ENCODE measurements at regions of chr2 and their contacts with region 1.

Region 1: DNA sequence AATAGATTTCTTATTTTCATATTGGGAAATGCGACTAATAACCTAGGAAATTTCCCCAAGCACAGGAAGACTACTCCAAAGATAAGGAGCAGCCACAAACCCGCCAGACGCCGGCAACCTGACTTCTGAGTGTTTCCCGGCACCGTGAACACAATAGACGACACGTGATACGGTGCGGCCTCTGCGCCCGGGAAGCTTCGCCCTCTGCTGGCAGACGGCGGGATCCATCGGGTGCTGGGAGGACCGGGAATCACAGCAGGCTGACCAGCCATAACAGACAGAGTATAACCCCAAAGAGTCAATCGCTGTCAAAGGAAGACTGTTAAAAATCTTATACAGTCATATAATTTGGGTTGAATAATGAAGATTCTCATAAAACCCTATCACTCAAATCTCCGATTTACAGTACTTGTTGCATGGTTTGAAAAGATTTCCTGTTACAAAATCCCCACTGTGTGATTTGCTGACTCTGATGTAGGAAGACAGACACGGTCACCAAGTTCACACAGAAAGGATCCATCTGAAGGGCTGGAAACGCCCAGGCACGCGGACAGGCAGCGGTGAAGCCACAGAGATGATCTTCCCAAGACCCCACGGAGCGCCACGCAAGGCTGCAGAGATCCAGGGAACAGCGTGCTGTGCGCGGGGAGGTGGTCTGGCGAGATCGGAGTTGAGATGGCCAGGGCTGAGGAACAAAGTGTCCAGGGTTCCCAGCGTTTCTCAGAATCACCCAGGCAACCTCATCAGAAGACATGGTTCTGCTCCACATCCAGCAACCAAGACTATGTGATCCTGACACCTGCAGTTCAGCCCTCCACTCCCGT is 73.8 kb downstream of the EIPR1 start:
- DNase-seq: peak; percentile 90
- H3K4me3 Mint-ChIP-seq: peak overlapping the region; percentile 21
- H3K27ac Mint-ChIP-seq: peak overlapping the region; percentile 63
- H3K4me1 Mint-ChIP-seq: peaks cover 21% of the 10 kb centered on the region
- H3K27me3 Mint-ChIP-seq: no peaks in the 10 kb centered on the region

Region 2: GRCh38 chr2:1854729-1855547 is 1448.9 kb before region 1 on chr2:
- CTCF ChIA-PET with region 1: no interaction called
- intact Hi-C with region 1: loop called (anchors 10 kb)
- DNase-seq: peak; percentile 33
- H3K4me3 Mint-ChIP-seq: no peak overlapping the region
- H3K27ac Mint-ChIP-seq: no peak overlapping the region
- H3K4me1 Mint-ChIP-seq: peaks cover 7% of the 10 kb centered on the region
- H3K27me3 Mint-ChIP-seq: peaks cover 41% of the 10 kb centered on the region

Region 3: DNA sequence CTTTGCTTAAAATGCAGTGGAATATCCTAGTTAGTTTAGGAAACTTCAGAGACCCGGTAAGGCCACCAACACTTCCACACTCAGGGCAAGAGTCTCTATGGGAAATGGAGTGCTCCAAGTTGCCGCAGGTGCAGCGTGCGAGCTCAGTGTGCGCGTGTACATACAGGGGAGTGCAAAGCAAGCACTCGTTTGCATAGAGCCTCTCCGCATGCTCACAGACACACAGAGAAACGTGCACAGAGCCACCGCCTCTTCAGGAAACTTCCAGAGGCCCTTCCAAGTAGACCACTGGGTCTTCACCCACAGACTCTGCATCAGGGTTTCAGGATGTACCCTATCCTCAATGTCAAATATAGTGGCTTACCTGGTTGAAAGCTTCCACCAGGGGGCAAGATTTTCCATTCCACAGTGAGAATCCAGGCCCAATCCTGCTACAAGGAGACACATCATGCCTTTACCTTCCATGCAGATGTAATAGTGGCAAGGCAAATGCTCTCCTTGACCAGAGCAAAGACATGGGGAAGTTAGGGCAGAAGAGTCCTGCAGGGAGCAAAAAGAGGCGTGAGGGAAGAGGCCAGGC is 459.7 kb before region 1 on chr2:
- CTCF ChIA-PET with region 1: no interaction called
- intact Hi-C with region 1: loop called (anchors 1 kb)
- DNase-seq: peak; percentile 13
- H3K4me3 Mint-ChIP-seq: no peak overlapping the region
- H3K27ac Mint-ChIP-seq: no peak overlapping the region
- H3K4me1 Mint-ChIP-seq: no peaks in the 10 kb centered on the region
- H3K27me3 Mint-ChIP-seq: no peaks in the 10 kb centered on the region

Region 4: GRCh38 chr2:3179208-3179607 is 124.6 kb before region 1 on chr2:
- CTCF ChIA-PET with region 1: no interaction called
- intact Hi-C with region 1: loop called (anchors 1 kb)
- DNase-seq: peak; percentile 60
- H3K4me3 Mint-ChIP-seq: no peak overlapping the region
- H3K27ac Mint-ChIP-seq: no peak overlapping the region
- H3K4me1 Mint-ChIP-seq: no peaks in the 10 kb centered on the region
- H3K27me3 Mint-ChIP-seq: no peaks in the 10 kb centered on the region

Region 5: DNA sequence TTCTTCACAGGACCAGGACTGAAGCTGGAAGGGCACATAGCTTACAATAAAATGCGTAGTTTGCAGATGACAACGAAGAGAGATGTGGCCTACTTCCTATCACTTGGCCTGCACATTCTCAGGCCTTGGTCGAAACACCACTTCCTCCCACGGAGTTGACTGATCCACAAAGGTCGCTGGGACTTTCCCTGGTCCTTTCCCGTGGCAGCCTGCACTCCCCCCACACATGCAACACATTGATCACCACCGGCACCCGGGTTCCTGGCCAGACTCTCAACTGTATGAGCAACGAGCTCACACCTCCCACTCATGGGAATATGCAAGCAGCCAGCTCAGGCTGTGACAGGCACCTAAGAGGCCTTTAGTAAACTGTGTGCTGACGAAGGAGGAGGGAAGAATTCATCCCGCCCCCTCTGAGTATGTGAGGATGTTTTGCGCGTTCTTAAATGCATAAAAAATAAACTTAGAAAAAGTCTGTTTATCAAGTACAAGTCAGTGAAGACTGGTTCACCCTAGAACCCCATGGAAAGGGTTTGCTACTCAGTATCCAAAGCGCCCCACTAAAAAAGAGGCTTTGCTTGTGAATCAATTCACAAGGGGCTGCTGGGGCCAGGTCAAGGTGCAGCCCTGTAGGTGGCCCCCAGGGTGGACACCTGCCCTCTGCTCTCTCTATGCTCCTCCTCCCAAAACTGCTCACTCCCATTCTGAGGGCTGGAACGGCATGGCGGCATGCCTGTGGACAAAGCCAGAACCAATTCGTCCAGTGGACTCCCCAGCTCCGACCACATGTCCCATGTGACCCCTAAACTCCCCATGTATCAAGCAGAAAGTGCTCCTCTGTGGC is 80.5 kb before region 1 on chr2:
- CTCF ChIA-PET with region 1: no interaction called
- intact Hi-C with region 1: loop called (anchors 1 kb)
- DNase-seq: peak; percentile 97
- H3K4me3 Mint-ChIP-seq: peak overlapping the region; percentile 35
- H3K27ac Mint-ChIP-seq: peak overlapping the region; percentile 100
- H3K4me1 Mint-ChIP-seq: peaks cover 44% of the 10 kb centered on the region
- H3K27me3 Mint-ChIP-seq: no peaks in the 10 kb centered on the region

Region 6: GRCh38 chr2:3361518-3362389 is 58.0 kb after region 1 on chr2:
- CTCF ChIA-PET with region 1: no interaction called
- intact Hi-C with region 1: no loop called
- DNase-seq: no peak
- H3K4me3 Mint-ChIP-seq: no peak overlapping the region
- H3K27ac Mint-ChIP-seq: no peak overlapping the region
- H3K4me1 Mint-ChIP-seq: peaks cover 38% of the 10 kb centered on the region
- H3K27me3 Mint-ChIP-seq: no peaks in the 10 kb centered on the region

Region 7: GRCh38 chr2:3413642-3414493 is 110.1 kb after region 1 on chr2:
- CTCF ChIA-PET with region 1: no interaction called
- intact Hi-C with region 1: no loop called
- DNase-seq: no peak
- H3K4me3 Mint-ChIP-seq: no peak overlapping the region
- H3K27ac Mint-ChIP-seq: no peak overlapping the region
- H3K4me1 Mint-ChIP-seq: peaks cover 8% of the 10 kb centered on the region
- H3K27me3 Mint-ChIP-seq: no peaks in the 10 kb centered on the region

Region 8: DNA sequence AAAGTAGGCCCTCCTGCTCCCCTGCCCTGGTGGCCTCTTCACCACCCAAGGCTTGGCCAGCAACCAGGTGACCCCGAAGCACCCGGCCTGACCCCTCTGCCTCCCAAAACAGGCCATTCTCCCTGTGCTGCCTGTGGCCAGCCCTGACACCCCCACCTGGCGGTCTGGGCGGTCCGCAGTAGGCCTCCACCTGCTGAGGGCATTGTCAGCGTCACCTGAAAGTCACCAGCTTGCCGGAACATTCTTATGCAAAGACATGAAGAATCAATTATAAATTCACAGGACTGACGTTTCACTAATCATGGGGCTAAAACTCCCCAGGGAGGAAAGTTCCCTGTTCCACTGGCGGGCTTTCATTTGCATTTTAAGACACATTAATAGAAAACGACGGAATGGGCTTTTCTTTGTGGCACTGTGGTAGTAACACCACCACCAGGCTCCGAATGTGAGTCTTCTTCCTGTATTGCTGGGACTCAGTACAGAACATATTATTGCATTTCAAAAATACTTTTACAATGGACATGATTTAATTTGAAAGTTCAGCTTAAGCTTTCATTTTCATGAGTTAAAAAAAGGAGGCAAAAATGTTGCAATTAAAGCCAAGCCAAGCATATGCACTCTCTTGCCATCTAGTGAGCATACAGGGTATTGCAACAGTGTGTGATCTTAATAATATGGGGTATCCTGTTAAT is 158.2 kb after region 1 on chr2:
- CTCF ChIA-PET with region 1: no interaction called
- intact Hi-C with region 1: loop called (anchors 1 kb)
- DNase-seq: peak; percentile 66
- H3K4me3 Mint-ChIP-seq: no peak overlapping the region
- H3K27ac Mint-ChIP-seq: peak overlapping the region; percentile 79
- H3K4me1 Mint-ChIP-seq: peaks cover 13% of the 10 kb centered on the region
- H3K27me3 Mint-ChIP-seq: no peaks in the 10 kb centered on the region